ENCODE measurements at regions of chr4 and their contacts with region 1.

Region 1: GRCh38 chr4:88284439-88285234 is at the start of gene PPM1K:
- DNase-seq: peak; percentile 98 to 99
- ATAC-seq: peak; percentile 92 to 93
- H3K4me3 ChIP-seq: peak within 1 kb of the TSS; percentile 81 to 98 (median 90)
- H3K27ac ChIP-seq: peak within 1 kb of the TSS; percentile 93 to 99 (median 98)
- H3K4me1 ChIP-seq: peaks cover 25 to 41% of the 10 kb centered on the region in 2 donors
- H3K27me3 ChIP-seq: no peaks in the 10 kb centered on the region
- CTCF ChIP-seq: peak in 1 of 5 experiments; percentile 21
- POLR2A ChIP-seq: peak; percentile 74 to 93
- total RNA-seq, gene PPM1K: 3.3 to 9.5 (median 6.9) TPM

Region 2: DNA sequence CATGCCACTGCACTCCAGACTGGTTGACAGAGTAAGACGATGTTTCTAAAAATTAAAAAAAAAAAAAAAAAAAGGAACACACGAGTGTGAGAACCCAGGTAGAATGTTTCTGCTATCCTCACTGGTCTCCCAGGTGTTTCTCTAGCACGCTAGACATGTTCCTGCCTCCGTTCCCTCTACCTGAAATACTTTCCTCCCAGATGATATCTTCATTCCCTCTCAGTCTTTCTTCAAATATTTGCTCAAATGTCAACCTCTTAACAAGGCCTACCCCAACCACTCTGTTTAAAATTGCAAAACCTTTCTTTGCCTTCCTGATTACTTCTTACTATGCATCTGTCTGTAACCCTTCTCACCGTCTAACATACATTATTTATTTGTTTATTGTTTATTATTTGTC is 66.7 kb before region 1 on chr4:
- in situ Hi-C with region 1: loop called in 1 of 4 experiments (anchors 10 kb)
- intact Hi-C with region 1: loop called (anchors 2 kb)
- DNase-seq: no peak
- ATAC-seq: no peak
- H3K4me3 ChIP-seq: no peak overlapping the region
- H3K27ac ChIP-seq: no peak overlapping the region
- H3K4me1 ChIP-seq: peaks cover 0 to 2% of the 10 kb centered on the region in 2 donors
- H3K27me3 ChIP-seq: no peaks in the 10 kb centered on the region
- CTCF ChIP-seq: no peak
- POLR2A ChIP-seq: no peak

Region 3: DNA sequence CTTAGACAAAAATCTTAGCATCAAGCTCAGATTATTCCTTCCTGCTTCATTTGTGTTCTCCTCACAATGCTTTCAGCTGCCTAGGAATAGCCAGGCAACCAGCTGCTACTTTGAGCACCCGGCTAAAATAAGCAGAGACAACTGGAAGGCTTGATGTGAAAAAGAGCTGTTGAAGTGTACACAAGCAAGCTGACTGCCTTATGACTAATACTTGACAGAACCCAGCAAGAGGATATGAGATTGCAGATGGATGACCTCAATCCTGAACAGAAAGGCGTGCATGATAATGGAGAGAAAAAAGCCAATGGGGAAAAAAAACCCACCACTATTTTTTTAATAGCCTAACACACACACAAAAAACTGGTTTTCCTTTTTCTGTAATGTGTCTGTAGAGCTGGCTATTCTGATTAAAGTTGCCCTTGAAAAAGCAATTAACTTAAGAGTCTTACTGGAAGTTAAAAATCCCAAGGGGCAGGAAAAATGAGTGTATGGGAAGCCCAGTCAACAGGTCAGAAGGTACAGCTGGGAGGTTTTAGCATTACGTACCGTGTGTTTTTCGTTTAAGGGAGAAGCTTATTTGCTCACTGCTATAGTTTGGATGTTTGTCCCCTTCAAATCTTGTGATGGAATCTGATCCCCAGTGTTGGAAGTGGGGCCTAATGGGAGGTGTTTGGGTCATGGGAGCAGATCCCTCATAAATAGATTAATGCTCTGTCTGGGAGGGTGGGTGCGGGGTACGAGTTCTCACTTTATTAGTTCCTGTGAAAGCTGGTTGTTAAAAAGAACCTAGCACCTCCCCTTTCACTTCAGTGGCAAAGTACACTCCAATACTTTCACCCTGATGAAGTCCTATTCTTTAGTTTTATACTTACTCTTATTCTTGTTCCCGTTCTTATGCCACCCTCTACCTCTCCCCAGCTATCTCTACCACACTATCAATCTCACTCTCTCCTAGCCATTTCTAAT is 56.9 kb after region 1 on chr4:
- in situ Hi-C with region 1: no loop called
- intact Hi-C with region 1: loop called (anchors 1 kb)
- DNase-seq: peak; percentile 55 to 72
- ATAC-seq: peak; percentile 100
- H3K4me3 ChIP-seq: no peak overlapping the region
- H3K27ac ChIP-seq: peak overlapping the region; percentile 84 to 90 (median 88)
- H3K4me1 ChIP-seq: peaks cover 9 to 16% of the 10 kb centered on the region in 2 donors
- H3K27me3 ChIP-seq: no peaks in the 10 kb centered on the region
- CTCF ChIP-seq: no peak
- POLR2A ChIP-seq: peak; percentile 24 to 69

Region 4: DNA sequence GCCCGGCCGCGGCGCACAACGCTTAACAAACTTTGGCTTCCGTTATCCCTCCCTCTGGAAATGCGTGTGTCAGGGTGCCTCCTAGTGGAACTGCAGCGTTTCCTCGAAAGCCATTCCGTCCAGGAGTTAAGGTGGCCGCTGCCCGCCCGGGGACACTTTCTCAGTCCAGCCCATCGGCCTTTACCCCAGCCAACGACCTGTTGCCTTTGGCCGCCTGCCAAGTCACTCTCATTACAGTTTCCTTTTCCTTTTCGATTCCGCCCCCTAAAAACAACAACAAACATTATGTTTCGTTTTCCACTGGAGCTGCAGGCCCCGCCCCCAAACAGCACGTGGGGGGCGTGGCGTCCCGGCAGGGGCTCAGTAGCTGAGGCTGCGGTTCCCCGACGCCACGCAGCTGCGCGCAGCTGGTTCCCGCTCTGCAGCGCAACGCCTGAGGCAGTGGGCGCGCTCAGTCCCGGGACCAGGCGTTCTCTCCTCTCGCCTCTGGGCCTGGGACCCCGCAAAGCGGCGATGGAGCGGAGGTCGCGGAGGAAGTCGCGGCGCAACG is 172.2 kb after region 1 on chr4 and contains the start of gene HERC5:
- in situ Hi-C with region 1: no loop called
- intact Hi-C with region 1: loop called (anchors 1 kb)
- DNase-seq: peak; percentile 61 to 82
- ATAC-seq: peak; percentile 88 to 95
- H3K4me3 ChIP-seq: peak within 1 kb of the TSS; percentile 67 to 98 (median 71)
- H3K27ac ChIP-seq: peak within 1 kb of the TSS; percentile 53 to 77 (median 63)
- H3K4me1 ChIP-seq: no peaks in the 10 kb centered on the region
- H3K27me3 ChIP-seq: no peaks in the 10 kb centered on the region
- CTCF ChIP-seq: peak; percentile 45 to 68 (median 62)
- POLR2A ChIP-seq: peak; percentile 34 to 60
- total RNA-seq, gene HERC5: 0.55 to 1.5 (median 1.1) TPM

Region 5: DNA sequence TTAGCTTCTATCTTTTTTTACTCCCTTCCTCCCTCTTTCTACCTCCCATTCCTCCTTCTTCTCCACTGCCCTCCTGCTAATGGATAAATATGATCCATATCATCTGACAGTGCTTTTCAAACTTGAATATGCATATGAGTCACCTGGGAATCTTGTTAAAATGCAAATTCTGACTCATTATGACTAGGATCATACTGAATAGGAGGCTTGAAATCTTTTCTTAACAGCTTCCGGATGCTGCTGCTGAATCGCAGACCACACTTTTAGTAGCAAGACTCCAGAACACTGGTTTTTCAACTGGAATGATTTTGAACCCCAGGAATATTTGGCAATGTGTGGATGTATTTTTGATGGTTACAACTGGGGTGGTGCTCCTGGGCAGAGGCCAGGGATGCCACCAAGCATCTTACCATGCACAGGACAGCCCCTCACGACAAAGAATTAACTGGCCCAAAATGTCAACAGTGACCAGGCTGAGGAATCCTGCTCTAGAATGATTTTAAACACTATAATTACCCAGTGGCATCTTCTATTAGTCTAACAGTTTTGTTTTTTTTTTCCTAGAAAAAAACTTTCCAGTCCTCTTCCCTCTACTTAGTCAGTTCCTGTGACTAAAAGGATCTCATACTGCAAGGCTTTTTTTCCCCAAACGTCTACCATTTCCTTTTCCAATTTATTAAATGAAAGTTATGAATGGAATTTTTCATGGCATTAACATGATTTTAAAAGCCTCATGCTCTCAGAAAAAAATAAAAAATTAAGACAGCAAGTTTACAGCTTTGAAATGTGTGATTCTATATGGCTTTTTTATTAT is 249.5 kb after region 1 on chr4:
- in situ Hi-C with region 1: no loop called
- intact Hi-C with region 1: no loop called
- DNase-seq: no peak
- ATAC-seq: no peak
- H3K4me3 ChIP-seq: no peak overlapping the region
- H3K27ac ChIP-seq: no peak overlapping the region
- H3K4me1 ChIP-seq: peaks cover 0 to under 1% of the 10 kb centered on the region in 2 donors
- H3K27me3 ChIP-seq: no peaks in the 10 kb centered on the region
- CTCF ChIP-seq: no peak
- POLR2A ChIP-seq: no peak

Region 6: GRCh38 chr4:88613417-88613875 is 328.8 kb after region 1 on chr4:
- in situ Hi-C with region 1: no loop called
- intact Hi-C with region 1: loop called (anchors 2 kb)
- DNase-seq: peak; percentile 23 to 39
- ATAC-seq: peak; percentile 52 to 63
- H3K4me3 ChIP-seq: no peak overlapping the region
- H3K27ac ChIP-seq: peak overlapping the region; percentile 75 to 86 (median 79)
- H3K4me1 ChIP-seq: peaks cover 71 to 84% of the 10 kb centered on the region in 2 donors
- H3K27me3 ChIP-seq: no peaks in the 10 kb centered on the region
- CTCF ChIP-seq: no peak
- POLR2A ChIP-seq: no peak

Measured in gastrocnemius medialis (tissue), 4 donors.